ENCODE measurements at regions of chr16 and their contacts with region 1.

Region 1: DNA sequence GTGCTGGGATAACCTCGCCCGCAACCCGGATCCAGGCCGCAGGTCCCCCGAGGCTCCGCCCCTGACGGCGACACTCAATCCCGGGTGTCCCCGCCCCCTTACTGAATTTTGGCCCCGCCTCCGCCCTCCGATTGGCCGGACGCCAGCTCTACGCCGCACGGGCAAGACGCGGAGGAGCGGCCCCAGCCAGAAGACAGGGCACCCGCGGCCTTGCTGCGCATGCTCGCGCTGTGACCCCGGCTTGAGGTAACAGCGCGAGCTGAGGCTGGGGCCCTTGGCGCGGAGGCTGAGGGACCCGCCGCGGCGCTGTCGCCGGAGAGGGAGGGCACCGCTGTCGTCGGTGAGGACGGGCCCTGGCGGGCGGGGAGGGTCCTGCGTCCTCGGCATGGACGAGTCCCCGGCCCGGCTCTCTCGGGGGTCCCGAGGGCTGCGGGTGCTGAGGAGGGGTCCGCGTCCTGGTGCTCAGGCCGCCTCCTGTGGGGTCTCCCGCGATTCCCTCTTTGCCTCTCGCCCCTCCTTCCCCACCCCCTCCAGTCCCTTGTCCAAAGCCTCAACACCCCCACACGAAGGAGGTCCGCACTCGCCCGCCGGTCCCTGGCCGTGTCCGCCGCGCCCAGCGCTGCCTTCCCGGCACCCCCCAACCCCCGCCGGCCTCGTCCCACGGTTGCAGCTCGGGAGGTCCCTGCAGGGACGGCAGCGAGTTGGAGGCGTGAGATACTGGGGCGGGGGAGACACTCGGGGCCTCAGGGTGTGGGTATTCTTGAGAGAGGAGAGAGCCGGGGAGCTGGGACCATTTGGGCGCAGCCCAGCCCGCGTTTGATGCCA is at the start of gene FLYWCH2:
- DNase-seq: peak; percentile 88 to 100
- H3K4me3 ChIP-seq: peak within 1 kb of the TSS; percentile 95
- H3K27ac ChIP-seq: no peak within 1 kb of the TSS
- H3K4me1 ChIP-seq: peaks cover 5% of the 10 kb centered on the region; the same call in 1 of the 2 replicates
- H3K27me3 ChIP-seq: no peaks in the 10 kb centered on the region
- CTCF ChIP-seq: no peak
- total RNA-seq, gene FLYWCH2: 41.5 and 50.1 TPM in 2 replicates

Region 2: GRCh38 chr16:2777231-2777902 is 105.9 kb before region 1 on chr16 and contains the start of gene ELOB:
- CTCF ChIA-PET with region 1: no interaction called
- POLR2A ChIA-PET with region 1: interaction called, 10 read pairs
- intact Hi-C with region 1: no loop called
- DNase-seq: peak; percentile 46 to 88
- H3K4me3 ChIP-seq: peak within 1 kb of the TSS; percentile 78
- H3K27ac ChIP-seq: peak within 1 kb of the TSS; percentile 94
- H3K4me1 ChIP-seq: peaks cover 20% of the 10 kb centered on the region
- H3K27me3 ChIP-seq: no peaks in the 10 kb centered on the region
- CTCF ChIP-seq: no peak
- total RNA-seq, gene ELOB: 259 and 401 TPM in 2 replicates

Region 3: GRCh38 chr16:2799866-2800239 is 83.4 kb before region 1 on chr16:
- CTCF ChIA-PET with region 1: no interaction called
- POLR2A ChIA-PET with region 1: no interaction called
- intact Hi-C with region 1: no loop called
- DNase-seq: peak in 1 of 2 experiments; percentile 87
- H3K4me3 ChIP-seq: no peak overlapping the region
- H3K27ac ChIP-seq: peak overlapping the region; percentile 27
- H3K4me1 ChIP-seq: peaks cover 36% of the 10 kb centered on the region
- H3K27me3 ChIP-seq: no peaks in the 10 kb centered on the region
- CTCF ChIP-seq: no peak

Region 4: DNA sequence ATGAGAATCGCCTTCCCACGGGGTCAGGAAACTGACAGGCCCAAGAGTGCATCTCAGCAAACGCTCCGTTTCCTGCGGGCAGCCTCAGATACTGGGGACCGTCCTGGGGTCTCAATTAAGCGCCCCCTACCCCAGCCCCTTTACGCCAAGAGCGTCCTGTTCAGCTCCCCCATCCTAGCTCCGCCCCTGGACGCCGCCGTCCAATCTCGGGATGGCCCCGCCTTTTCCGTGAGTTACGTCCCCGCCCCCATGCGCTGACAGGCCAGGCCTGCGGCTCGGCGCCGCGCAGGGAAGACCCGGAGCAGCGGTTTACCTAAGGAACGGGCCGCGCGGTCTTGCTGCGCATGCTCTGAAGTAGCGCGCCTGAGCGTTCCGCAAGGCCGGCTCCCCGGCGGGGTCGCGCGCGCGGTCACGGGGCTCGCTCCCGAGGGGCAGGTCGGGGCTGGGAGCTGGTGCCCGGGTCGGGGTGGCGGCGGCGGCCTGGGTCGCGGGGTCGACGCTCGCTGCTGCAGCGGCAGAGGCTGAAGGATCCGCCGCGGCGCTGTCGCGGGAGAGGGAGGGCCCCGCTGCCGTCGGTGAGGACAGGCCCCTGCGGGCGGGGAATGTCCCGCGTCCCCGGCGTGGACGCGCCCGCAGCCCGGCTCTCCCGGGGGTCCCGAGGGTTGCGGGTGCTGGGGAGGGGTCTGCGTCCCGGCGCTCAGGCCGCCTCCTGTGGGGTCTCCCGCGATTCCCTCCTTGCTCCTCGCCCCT is 28.5 kb after region 1 on chr16 and contains the start of gene FLYWCH1:
- CTCF ChIA-PET with region 1: interaction called, 4 read pairs
- POLR2A ChIA-PET with region 1: interaction called, 14 read pairs
- intact Hi-C with region 1: no loop called
- DNase-seq: peak; percentile 89 to 99
- H3K4me3 ChIP-seq: peak within 1 kb of the TSS; percentile 83
- H3K27ac ChIP-seq: no peak within 1 kb of the TSS
- H3K4me1 ChIP-seq: peaks cover 40% of the 10 kb centered on the region
- H3K27me3 ChIP-seq: no peaks in the 10 kb centered on the region
- CTCF ChIP-seq: no peak
- total RNA-seq, gene FLYWCH1: 79.9 and 84.8 TPM in 2 replicates

Region 5: DNA sequence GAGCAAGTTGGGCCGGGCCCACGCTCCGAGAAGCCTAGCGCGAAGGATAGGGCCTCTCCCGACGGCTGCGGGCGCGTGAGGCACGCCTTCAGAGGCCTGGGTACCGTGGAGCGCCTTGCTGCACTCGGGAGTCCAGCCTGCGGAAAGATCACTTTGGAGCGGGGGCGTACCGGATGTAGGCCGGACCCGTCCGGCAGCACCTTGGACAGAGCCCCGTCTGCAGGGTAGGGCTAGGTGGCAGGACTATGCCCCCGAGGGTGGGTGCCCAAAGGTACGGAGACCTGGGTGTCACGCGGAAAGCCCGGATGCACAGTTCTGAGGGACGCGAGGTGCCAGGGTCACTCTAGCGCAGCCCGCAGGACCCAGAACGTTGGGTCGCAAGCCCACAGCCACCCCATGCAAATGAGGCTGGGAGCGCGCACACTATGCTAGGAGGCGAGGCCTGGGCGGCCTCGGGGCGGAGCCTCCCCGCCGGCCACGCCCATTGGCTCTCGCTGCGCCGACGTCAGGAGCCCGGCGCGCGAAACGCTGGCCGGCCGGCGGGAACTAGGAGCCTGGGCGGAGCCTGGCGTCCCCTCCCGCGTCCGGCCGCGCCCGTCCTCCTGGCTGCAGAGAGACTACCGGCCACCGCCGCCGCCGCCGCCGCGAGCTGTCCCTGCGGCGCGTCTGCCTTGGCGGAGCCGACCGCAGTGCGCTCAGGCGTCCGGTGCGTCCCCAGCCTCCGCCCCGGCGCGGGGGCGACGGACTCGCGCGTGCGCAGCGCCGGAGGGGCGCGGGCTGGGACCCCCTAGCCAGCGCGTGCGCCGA is 85.7 kb after region 1 on chr16 and contains the start of gene PAQR4:
- CTCF ChIA-PET with region 1: no interaction called
- POLR2A ChIA-PET with region 1: no interaction called
- intact Hi-C with region 1: loop called (anchors 10 kb)
- DNase-seq: peak; percentile 68 to 95
- H3K4me3 ChIP-seq: peak within 1 kb of the TSS; percentile 77
- H3K27ac ChIP-seq: no peak within 1 kb of the TSS
- H3K4me1 ChIP-seq: peaks cover 5% of the 10 kb centered on the region
- H3K27me3 ChIP-seq: no peaks in the 10 kb centered on the region
- CTCF ChIP-seq: no peak
- total RNA-seq, gene PAQR4: 33.6 and 40.7 TPM in 2 replicates

Region 6: DNA sequence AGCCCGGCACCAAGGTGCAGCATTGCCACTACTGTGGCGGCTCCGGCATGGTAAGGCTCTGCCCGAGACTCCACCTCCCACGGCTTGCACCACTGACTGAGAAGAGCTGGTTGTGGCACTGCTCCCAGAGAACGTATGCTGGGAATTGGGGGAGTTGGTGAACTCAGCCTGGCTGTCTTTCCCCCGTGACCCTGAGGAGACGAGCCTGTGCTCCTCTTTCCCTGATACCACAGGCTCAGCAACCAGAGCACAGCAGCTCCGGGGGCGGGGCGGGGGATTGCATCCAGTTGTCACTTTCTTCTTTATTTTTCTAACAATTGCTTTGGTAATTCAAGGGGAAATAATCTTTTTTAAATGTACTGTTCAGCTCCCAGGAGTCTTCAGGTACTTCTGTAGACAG is 1559.1 kb after region 1 on chr16:
- CTCF ChIA-PET with region 1: interaction called, 21 read pairs
- POLR2A ChIA-PET with region 1: no interaction called
- intact Hi-C with region 1: no loop called
- DNase-seq: no peak
- H3K4me3 ChIP-seq: no peak overlapping the region
- H3K27ac ChIP-seq: no peak overlapping the region
- H3K4me1 ChIP-seq: no peaks in the 10 kb centered on the region
- H3K27me3 ChIP-seq: no peaks in the 10 kb centered on the region
- CTCF ChIP-seq: no peak